ENCODE measurements at regions of chr1 and their contacts with region 1.

Region 1: DNA sequence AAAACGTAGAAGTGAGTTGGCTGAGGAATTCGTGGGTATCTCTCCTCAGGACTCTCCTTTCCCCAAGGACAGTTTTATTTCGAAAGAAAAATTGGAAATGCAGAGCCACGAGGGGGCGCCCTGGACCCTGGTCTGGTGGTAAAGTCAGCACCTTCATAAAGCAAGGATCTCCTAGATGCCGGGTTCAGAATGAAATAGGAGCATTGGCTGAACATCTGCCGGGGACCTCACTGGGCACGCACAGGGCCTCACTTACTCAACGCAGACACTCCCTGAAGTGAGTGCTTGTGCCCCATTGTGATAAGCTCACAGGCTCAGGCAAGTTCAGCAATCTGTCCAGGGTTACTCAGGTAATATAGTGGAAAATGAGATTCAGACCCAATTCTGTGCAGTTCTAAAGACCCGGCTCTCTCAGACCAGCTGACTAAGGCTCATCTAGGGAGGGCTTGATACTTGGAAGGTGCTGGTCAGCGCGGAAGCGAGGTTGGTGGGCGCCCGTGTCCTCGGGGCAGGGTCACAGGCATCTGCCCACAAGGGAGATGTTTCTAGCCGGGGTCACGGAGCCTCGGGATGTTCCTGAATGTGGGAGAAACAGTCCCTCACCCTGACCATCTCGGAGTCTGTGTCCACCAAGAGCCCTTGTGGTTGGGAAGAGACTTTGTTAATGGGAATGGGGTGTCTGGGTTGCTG is 55.7 kb upstream of the ETV3 start:
- DNase-seq: peak; percentile 80
- H3K4me3 Mint-ChIP-seq: no peak overlapping the region
- H3K27ac Mint-ChIP-seq: no peak overlapping the region
- H3K4me1 Mint-ChIP-seq: peaks cover 3% of the 10 kb centered on the region
- H3K27me3 Mint-ChIP-seq: peaks cover 26% of the 10 kb centered on the region

Region 2: DNA sequence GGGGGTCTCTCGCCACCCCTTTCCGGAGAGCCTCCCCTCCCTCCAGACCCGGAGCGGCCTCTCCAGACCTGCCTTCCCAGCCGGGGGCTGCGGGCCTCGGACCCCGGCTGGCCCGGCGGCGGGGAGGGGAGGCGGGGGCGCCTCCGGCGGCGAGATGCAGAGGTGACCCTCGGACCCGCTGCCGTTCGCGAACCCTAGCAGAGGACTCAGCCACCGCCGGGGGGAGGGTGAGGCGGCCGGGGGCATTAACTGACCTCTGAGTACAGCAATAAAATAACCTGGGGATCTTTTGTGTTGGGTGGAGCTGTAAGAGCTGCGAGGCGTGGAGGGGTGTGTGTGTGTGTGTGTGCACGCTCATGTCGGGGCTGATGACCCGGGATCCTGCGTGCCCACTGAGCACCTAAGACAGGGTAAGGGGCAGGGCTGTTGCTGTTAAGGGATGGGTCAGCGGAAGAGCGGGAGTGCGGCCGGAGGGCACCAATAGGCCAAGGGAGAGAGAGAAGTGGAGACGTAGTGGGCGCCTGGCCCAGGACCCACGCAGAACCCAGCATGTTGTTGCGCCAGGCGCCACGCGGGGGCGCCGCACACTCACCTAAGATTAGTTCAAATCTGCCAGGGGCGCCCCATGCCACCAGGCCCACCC is 568.3 kb before region 1 on chr1:
- CTCF ChIA-PET with region 1: no interaction called
- intact Hi-C with region 1: no loop called
- DNase-seq: peak; percentile 65
- H3K4me3 Mint-ChIP-seq: peak overlapping the region; percentile 36
- H3K27ac Mint-ChIP-seq: no peak overlapping the region
- H3K4me1 Mint-ChIP-seq: peaks cover 7% of the 10 kb centered on the region
- H3K27me3 Mint-ChIP-seq: peaks cover 40% of the 10 kb centered on the region

Region 3: GRCh38 chr1:157369808-157370521 is 176.1 kb after region 1 on chr1:
- CTCF ChIA-PET with region 1: no interaction called
- intact Hi-C with region 1: loop called (anchors 5 kb)
- DNase-seq: peak; percentile 58
- H3K4me3 Mint-ChIP-seq: no peak overlapping the region
- H3K27ac Mint-ChIP-seq: no peak overlapping the region
- H3K4me1 Mint-ChIP-seq: no peaks in the 10 kb centered on the region
- H3K27me3 Mint-ChIP-seq: peaks cover 8% of the 10 kb centered on the region

Measured in activated naive CD4-positive, alpha-beta T cell treated with anti-CD3 and anti-CD28 coated beads for 36 hours (primary cell).